Cardiac septum (tissue), 1 donor: ENCODE measurements at regions of chr11 and their contacts with region 1.

Region 1: DNA sequence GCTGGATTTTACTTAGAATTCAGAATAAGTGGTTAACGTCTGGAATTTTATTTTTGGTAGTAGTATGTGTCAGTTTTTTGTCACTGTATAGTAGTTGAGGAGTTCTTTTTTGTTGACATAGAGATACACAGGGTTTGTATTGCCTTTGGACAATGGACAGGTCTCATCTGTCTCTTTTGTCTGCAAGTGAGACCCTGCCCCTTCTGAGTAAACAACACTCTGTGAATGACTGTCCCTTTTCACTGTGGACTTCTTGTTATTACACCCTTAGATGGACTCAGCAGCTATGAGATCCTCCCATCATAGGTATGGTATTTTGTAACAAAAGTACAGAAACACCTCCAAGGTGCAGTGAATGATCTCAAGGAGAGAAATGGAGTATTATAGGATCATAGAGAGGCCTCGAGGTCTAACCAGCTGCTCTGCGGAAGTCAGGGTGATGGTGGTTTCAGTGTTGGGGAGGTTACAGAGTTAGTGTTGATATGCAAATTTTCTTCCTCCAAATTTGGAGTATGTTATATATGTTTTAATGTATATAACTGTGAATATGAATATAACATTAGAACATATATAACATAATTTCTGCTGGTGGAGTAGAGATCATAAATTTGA is 7.8 kb downstream of the PPP6R3 start:
- DNase-seq: no peak

Region 2: GRCh38 chr11:68524681-68525080 is 56.4 kb after region 1 on chr11:
- intact Hi-C with region 1: loop called (anchors 5 kb)
- DNase-seq: no peak